ENCODE measurements at regions of chr6 and their contacts with region 1.

Region 1: DNA sequence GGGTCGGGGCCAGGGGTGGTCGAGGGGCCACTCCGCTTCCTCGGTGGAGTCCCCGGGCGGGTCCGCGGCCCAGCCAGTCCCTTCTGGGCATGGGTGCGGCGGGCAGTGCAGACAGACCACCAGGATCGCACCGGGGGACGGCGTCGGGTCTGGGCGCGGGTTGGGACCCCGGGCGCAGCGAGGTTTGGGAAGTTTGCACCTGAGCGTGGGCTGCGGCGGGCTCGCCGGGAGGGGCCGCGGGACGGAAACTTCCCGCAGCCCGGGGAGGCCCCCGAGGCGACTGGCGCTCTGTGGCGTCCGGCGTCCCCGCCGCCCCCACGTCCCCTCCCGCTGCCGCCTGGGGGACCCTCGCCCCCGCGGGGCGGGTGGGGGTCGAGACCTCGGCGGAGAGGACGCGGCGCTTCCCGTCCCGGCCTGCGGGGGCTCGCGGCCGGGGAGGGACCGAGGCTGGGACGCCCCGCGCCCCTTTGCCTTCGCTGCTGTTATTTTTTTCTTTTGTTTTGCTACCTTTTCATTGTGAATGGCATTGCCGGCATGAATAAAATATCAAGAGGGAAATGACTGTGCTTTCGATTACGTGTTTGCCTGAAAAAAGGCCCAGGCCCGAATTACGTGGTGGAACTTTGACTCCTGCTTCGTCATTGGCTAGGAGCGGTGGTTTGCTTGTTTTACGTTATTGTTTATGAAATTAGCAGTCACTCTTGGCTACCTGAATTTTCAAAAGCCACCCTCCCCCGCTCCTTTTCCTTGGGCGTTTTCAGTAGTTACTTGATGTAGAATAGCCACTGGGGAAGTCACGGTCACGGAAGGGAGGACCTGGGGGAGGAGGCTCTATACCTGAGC is 703 bp downstream of the SNX9 start:
- DNase-seq: peak; percentile 56 to 85 (median 72)
- ATAC-seq: peak; percentile 59
- H3K4me3 ChIP-seq: peak overlapping the region; percentile 68
- H3K27ac ChIP-seq: peak overlapping the region; percentile 91
- H3K4me1 ChIP-seq: peaks cover 16% of the 10 kb centered on the region in 2 experiments; a peak in 4 of 5 replicates
- H3K27me3 ChIP-seq: no peaks in the 10 kb centered on the region
- CTCF ChIP-seq: peak in 2 of 3 experiments; percentile 1 to 35; a peak in 2 of 6 replicates
- EP300 ChIP-seq: peak; percentile 67; the same call in 1 of the 2 replicates
- POLR2A ChIP-seq: peak; percentile 73
- RAD21 ChIP-seq: no peak; a peak in 1 of 4 replicates

Region 2: DNA sequence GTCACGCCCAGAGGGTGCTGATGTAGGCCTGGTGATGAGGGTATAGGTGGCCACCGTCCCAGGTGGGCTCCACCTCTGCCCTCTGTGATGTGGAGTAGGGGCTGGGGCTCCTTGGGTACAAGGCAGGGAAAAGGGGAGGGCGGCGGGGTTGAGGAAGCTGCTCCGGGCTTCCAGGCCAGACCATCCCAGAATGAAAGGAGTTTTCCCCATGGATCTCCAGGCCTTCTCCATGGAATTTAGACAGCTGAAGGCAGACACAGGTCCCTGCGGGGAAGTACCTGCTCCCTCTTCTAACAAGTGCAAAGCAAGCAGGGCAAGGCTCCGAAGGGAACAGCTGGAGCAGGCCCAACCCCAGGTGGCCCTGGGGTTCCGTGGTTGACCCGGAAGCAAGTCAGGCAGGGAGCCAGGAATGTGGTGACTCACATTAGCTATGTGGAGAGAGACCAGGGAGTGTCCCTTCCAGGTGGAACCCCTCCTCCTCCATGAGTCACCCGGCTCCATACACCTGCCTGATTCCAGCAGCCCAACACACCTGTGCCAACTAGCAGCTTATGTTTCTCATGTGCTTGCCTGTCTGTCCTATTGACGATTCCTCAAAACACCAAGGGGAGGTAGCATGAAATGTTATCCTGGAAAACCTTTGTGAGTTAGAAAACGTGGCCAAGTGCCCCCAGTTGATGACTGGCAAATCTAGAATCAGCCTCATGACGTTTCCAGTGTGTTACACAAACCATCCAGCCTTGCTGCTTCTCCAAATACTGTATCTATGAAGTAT is 60.4 kb before region 1 on chr6:
- CTCF ChIA-PET with region 1: no interaction called
- POLR2A ChIA-PET with region 1: interaction called, 4 read pairs
- in situ Hi-C with region 1: loop called (anchors 5 kb)
- intact Hi-C with region 1: loop called (anchors 2 kb)
- DNase-seq: peak; percentile 79 to 94 (median 90)
- ATAC-seq: peak; percentile 68
- H3K4me3 ChIP-seq: no peak overlapping the region
- H3K27ac ChIP-seq: peak overlapping the region; percentile 42; the same call in 2 of the 3 replicates
- H3K4me1 ChIP-seq: peaks cover 32 to 53% of the 10 kb centered on the region in 2 experiments
- H3K27me3 ChIP-seq: no peaks in the 10 kb centered on the region
- CTCF ChIP-seq: no peak
- EP300 ChIP-seq: peak; percentile 56
- POLR2A ChIP-seq: no peak
- RAD21 ChIP-seq: peak in 1 of 2 experiments; percentile 16; a peak in 1 of 4 replicates

Region 3: DNA sequence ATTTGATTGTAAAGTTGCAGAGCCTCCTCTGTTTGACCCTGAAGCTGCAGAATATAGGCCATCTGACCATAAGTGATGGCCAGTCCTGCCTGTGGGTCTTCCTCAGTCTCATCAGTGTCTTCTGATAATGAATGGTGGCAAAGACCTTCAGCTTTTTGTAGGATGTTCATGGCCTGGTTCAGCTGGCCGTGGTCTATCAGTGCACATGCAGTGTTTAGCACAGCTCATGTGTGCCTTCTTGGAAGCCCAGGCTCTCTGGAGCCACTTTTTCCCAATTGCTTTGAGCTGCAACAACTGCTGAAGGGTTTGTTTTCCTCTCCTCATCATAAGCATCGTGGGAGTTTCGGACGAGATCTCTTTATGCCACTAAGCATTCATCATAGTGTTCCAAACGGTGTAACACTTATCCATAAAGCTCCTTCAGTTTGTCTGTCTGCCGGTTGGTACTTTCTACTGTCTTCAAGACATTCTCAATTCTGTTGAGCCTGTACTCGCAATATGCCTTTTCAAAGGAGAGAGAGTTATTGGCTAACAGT is 418.4 kb after region 1 on chr6:
- CTCF ChIA-PET with region 1: no interaction called
- POLR2A ChIA-PET with region 1: no interaction called
- in situ Hi-C with region 1: no loop called
- intact Hi-C with region 1: no loop called
- DNase-seq: no peak
- ATAC-seq: peak; percentile 67
- H3K4me3 ChIP-seq: no peak overlapping the region
- H3K27ac ChIP-seq: peak overlapping the region; percentile 68
- H3K4me1 ChIP-seq: peaks cover 10 to 12% of the 10 kb centered on the region in 2 experiments
- H3K27me3 ChIP-seq: no peaks in the 10 kb centered on the region
- CTCF ChIP-seq: no peak
- EP300 ChIP-seq: no peak
- POLR2A ChIP-seq: no peak
- RAD21 ChIP-seq: no peak

Measured in K562 (cell line).